ENCODE measurements at regions of chr19 and their contacts with region 1.

Region 1: GRCh38 chr19:18340190-18340989 is at the start of gene PGPEP1:
- DNase-seq: peak; percentile 80
- ATAC-seq: peak; percentile 93 to 95
- total RNA-seq, gene PGPEP1: 27.5 to 34.7 TPM

Region 2: GRCh38 chr19:18419195-18419698 is 78.9 kb after region 1 on chr19 and contains the start of gene SSBP4:
- intact Hi-C with region 1: loop called in 1 of 2 experiments (anchors 5 kb)
- DNase-seq: peak; percentile 75
- ATAC-seq: peak; percentile 15 to 31
- total RNA-seq, gene SSBP4: 37.4 to 49.3 TPM

Region 3: GRCh38 chr19:18588611-18589379 is 248.4 kb after region 1 on chr19 and contains the start of gene REX1BD:
- intact Hi-C with region 1: no loop called
- DNase-seq: peak; percentile 91
- ATAC-seq: peak; percentile 91 to 93
- total RNA-seq, gene REX1BD: 65.3 to 76.0 TPM

Measured in left cardiac atrium (tissue), 4 donors.